HepG2 (cell line): ENCODE measurements at regions of chr6 and their contacts with region 1.

Region 1: DNA sequence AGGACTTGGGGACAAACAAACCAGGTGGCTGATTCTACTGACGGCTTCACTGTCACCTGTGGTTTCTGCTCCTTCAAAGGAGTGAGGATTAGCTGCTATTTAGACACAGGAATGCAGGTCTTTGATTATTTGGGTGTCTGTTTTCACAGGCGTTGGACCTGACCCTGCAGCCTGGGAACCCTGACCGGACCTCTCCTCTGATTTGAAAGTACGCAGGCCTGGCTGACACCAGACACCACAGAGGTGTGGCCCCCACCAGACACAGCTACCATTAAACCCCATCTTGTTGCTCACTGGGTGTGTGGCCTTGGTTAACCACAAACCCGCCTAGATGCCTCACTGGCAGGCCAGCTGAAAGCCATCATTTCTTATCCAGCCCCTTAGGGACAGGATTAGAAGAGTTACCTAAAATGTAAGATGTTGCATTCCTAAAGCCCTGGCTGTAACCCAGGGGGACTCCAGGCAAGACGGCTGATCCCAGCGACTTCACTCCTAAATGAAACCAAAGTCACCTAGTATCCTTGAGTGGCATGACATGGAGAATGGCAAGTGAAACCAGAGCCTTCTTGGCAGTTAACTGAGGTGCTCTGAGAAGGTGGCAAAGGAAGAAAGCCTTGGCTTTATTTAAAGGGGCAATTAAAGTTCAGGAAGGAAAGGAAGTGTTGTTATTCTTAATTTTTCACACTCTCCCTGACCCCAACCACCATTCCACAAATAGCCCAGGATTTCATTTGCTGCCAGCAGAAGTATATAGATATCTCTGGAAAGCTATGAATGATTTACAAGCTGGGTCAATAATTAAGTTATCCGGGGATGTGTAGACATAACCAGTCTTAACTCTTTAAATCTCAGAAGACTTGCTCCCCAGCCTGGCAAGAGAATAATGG is 169.9 kb downstream of the QRSL1 start:
- DNase-seq: peak; percentile 77
- ATAC-seq: peak; percentile 94
- H3K4me3 ChIP-seq: peak overlapping the region; percentile 49 to 54 (median 52)
- H3K27ac ChIP-seq: peak overlapping the region; percentile 75
- H3K4me1 ChIP-seq: peaks cover 61% of the 10 kb centered on the region
- H3K27me3 ChIP-seq: no peaks in the 10 kb centered on the region
- CTCF ChIP-seq: no peak
- EP300 ChIP-seq: peak in 1 of 2 experiments; percentile 50; a peak in 2 of 4 replicates
- POLR2A ChIP-seq: no peak
- RAD21 ChIP-seq: no peak

Region 2: DNA sequence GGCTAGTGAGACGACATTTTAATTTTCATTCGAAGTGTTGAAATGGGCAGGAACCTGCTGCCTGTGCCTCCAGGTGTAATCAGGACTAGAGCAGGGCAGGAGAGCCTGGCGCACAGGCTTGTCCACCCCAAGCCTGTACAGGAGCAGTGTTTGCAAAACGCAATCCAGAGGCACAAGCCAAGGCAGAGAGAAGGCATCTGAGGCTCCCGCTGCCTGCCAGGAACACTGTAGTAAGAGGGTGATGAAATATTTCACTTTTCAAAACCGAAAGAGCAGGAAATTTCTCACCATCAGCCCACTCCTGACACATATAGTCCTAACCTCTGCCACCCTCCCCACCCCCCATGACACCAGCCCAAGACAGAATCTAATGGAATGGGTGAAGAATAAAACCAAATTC is 302.4 kb before region 1 on chr6:
- CTCF ChIA-PET with region 1: no interaction called
- POLR2A ChIA-PET with region 1: no interaction called
- in situ Hi-C with region 1: no loop called
- intact Hi-C with region 1: no loop called
- DNase-seq: no peak
- ATAC-seq: peak; percentile 75
- H3K4me3 ChIP-seq: peak overlapping the region in 1 of 3 experiments; percentile 39; a peak in 2 of 6 replicates
- H3K27ac ChIP-seq: no peak overlapping the region
- H3K4me1 ChIP-seq: no peaks in the 10 kb centered on the region
- H3K27me3 ChIP-seq: peaks cover 0 to 11% of the 10 kb centered on the region in 2 experiments; a peak in 2 of 5 replicates
- CTCF ChIP-seq: no peak
- EP300 ChIP-seq: no peak
- POLR2A ChIP-seq: no peak
- RAD21 ChIP-seq: no peak

Region 3: DNA sequence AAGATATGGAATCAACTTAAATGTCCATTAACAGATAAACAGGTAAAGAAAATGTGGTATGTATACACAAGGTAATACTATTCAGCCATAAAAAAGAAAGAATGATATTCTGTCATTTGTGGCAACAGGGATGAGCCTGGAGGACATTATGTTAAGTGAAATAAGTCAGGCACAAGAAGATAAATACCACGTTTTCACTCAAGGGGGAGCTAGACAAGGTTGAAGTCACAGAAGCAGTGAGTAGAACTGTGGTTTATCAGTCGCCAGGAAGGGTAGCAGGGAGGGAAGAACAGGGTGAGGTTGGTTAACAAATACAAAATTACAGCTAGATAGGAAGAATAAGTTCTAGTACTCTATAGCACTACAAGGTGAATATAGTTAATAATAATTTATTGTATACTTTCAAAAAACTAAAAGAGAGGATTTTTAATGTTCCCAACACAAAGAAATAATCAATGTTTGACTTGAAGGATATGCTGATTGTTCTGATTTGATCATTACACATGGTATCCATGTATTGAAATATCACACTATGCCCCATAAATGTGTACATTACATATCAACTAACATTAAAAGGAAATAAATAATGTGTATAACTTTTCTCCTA is 191.1 kb before region 1 on chr6:
- CTCF ChIA-PET with region 1: no interaction called
- POLR2A ChIA-PET with region 1: no interaction called
- in situ Hi-C with region 1: no loop called
- intact Hi-C with region 1: loop called (anchors 2 kb)
- DNase-seq: peak; percentile 79
- ATAC-seq: peak; percentile 83
- H3K4me3 ChIP-seq: no peak overlapping the region
- H3K27ac ChIP-seq: no peak overlapping the region
- H3K4me1 ChIP-seq: no peaks in the 10 kb centered on the region
- H3K27me3 ChIP-seq: no peaks in the 10 kb centered on the region
- CTCF ChIP-seq: peak; percentile 76
- EP300 ChIP-seq: no peak
- POLR2A ChIP-seq: no peak
- RAD21 ChIP-seq: peak; percentile 47; the same call in 1 of the 2 replicates

Region 4: GRCh38 chr6:106637717-106638341 is 161.4 kb before region 1 on chr6:
- CTCF ChIA-PET with region 1: no interaction called
- POLR2A ChIA-PET with region 1: no interaction called
- in situ Hi-C with region 1: no loop called
- intact Hi-C with region 1: loop called (anchors 10 kb)
- DNase-seq: no peak
- ATAC-seq: no peak
- H3K4me3 ChIP-seq: no peak overlapping the region
- H3K27ac ChIP-seq: no peak overlapping the region
- H3K4me1 ChIP-seq: peaks cover 9% of the 10 kb centered on the region; the same call in 1 of the 2 replicates
- H3K27me3 ChIP-seq: no peaks in the 10 kb centered on the region
- CTCF ChIP-seq: no peak
- EP300 ChIP-seq: no peak
- POLR2A ChIP-seq: no peak
- RAD21 ChIP-seq: no peak

Region 5: DNA sequence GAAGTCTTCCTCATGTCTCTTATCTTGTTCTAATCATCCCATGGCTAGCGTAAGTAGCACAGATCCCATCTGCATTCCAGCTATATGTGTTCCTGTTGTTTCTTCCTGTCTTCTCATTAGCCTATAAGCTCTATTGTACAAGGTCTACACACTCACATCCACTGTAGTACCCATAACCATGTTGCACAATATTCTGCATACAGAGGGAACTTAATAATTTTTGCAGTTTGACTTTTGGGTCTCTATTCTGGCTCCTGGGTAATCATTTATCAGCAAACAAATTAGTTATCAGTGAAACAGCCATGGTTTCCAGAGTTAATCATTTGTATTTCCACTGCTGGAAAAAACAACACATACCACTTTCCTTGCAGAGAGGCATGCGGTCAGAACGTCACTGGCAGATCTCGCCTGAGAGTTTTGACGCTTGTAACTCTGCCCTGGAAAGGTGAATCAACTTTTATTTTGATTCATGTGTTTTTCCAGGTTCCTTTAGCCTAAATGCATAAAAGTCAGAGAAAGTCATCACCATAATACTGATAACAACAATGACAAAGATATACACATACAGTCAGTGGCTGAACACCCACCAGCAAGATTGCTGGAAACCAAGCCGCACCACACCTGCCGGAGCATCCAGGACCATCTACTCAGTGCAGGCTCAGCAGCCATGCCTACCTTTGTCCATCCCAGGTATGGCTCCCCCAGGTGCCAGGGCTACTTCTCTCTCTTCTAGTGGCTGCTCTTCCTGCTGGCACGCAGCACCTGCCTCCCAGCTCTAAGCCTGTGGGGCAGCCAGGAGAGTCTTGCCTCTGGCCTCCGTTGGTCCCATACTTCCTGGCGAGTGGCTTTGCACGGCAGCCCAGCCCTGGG is 11.7 kb before region 1 on chr6:
- CTCF ChIA-PET with region 1: no interaction called
- POLR2A ChIA-PET with region 1: interaction called, 23 read pairs
- in situ Hi-C with region 1: no loop called
- intact Hi-C with region 1: no loop called
- DNase-seq: peak; percentile 92
- ATAC-seq: peak; percentile 88
- H3K4me3 ChIP-seq: peak overlapping the region; percentile 46 to 63 (median 50); a peak in 5 of 6 replicates
- H3K27ac ChIP-seq: peak overlapping the region; percentile 55
- H3K4me1 ChIP-seq: peaks cover 98% of the 10 kb centered on the region
- H3K27me3 ChIP-seq: no peaks in the 10 kb centered on the region
- CTCF ChIP-seq: no peak
- EP300 ChIP-seq: peak in 1 of 2 experiments; percentile 47; a peak in 1 of 4 replicates
- POLR2A ChIP-seq: no peak
- RAD21 ChIP-seq: no peak

Region 6: GRCh38 chr6:106883808-106884262 is 84.6 kb after region 1 on chr6:
- CTCF ChIA-PET with region 1: no interaction called
- POLR2A ChIA-PET with region 1: interaction called, 3 read pairs
- in situ Hi-C with region 1: no loop called
- intact Hi-C with region 1: loop called (anchors 5 kb)
- DNase-seq: peak; percentile 36
- ATAC-seq: peak; percentile 48
- H3K4me3 ChIP-seq: no peak overlapping the region
- H3K27ac ChIP-seq: no peak overlapping the region
- H3K4me1 ChIP-seq: peaks cover 50% of the 10 kb centered on the region
- H3K27me3 ChIP-seq: no peaks in the 10 kb centered on the region; a peak in 1 of 5 replicates
- CTCF ChIP-seq: peak; percentile 49
- EP300 ChIP-seq: no peak
- POLR2A ChIP-seq: no peak
- RAD21 ChIP-seq: no peak

Region 7: DNA sequence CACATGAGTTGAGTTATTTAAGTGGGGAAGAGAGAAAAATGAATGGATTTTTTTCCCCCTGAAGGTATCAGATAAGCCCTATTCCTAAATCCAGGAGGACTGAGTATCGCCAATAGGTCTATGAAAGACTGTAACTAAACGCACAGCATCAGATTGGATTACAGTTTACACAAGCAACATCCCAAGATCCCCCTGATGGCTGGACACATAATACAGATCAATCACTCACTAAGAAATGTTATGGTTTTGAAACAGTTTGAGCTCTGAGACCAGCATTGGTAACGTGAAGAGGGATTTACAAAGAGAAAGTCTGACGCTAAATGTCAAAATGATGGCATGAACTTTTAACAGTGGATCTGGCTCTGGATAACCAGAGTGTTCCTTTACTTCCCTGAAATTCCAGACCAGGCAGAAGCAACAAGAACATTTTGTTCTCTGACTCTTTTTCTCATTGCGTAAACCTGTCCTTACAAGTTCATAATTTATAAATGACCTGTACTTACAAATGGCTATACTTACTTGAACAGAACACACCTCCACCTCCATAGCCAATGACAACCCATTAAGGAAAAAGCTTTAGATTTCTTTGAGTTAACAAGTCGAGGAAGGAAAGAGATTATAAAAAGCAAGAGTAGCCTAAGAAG is 447.8 kb after region 1 on chr6:
- CTCF ChIA-PET with region 1: no interaction called
- POLR2A ChIA-PET with region 1: no interaction called
- in situ Hi-C with region 1: no loop called
- intact Hi-C with region 1: no loop called
- DNase-seq: no peak
- ATAC-seq: no peak
- H3K4me3 ChIP-seq: no peak overlapping the region
- H3K27ac ChIP-seq: no peak overlapping the region
- H3K4me1 ChIP-seq: 0 out of 2 replicates have a peak, but pooled peaks cover 12% of the 10 kb centered on the region
- H3K27me3 ChIP-seq: no peaks in the 10 kb centered on the region
- CTCF ChIP-seq: no peak
- EP300 ChIP-seq: no peak
- POLR2A ChIP-seq: no peak
- RAD21 ChIP-seq: no peak